SK-N-SH (cell line): ENCODE measurements at regions of chr11 and their contacts with region 1.

Region 1: DNA sequence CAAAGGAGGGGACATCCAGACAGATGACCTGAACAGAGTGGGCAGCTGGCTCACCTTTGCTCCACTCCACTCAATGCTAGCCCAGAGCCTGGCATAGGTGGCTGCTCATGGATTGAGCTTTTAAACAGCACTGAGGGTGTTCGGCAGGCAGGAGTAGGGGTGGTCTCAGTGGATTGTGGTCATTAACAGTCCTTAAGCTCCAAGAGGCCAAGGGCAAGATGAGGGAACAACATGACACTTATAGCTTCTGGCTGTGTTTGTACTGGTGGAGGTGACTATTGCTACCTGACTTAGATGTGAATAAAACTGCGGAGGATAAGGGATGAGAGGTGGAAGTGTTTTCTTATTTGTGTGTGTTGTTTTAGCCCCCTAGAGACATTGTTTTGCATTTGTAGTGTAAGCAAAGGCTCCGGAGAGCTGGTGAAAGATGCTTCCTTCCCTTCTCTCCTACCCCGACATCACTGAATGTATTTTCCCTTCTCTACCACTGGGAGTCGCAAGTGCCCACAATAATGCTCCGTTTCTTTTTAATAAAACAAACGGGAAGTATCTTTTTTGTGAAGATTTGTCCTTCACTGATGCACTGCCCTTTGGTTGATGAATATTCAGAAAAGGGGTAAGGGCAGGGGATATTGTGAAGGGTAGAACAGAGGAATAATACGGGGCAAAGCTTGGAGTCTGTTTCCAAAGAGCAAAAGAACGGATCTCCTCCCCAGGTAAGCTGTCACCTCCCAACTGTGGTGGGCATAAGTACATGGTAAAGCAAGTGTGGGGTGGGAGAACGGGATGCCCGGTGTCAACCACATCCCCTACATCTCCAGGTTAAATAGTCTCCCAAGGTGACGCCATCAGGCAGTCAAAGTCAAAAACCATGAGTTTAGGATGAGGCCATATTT is 27.5 kb upstream of the MTNR1B start:
- DNase-seq: peak; percentile 64
- H3K4me3 ChIP-seq: no peak overlapping the region; a peak in 1 of 4 replicates
- H3K27ac ChIP-seq: no peak overlapping the region
- H3K4me1 ChIP-seq: no peaks in the 10 kb centered on the region; a peak in 1 of 4 replicates
- H3K27me3 ChIP-seq: no peaks in the 10 kb centered on the region
- CTCF ChIP-seq: peak; percentile 81
- EP300 ChIP-seq: no peak
- RAD21 ChIP-seq: peak; percentile 94

Region 2: DNA sequence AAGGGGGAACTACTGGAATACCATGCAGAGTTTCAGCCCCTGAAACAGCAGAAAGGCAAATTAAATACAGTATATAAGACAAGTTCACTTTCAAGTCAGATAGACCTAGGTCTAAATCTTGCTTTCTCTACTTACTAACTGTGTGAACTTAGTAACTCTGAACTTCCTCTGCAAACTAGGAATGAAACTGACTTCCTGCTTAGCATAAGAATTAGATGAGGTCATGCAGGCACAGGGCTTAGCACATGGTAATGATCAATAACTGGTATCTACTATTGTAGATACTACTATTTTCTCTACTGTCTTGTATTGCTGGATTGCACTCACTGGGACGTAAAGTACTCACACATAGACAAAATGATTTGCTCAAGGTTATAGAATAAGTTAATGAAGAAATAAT is 24.0 kb before region 1 on chr11:
- CTCF ChIA-PET with region 1: interaction called, 15 read pairs
- POLR2A ChIA-PET with region 1: no interaction called
- DNase-seq: no peak
- H3K4me3 ChIP-seq: no peak overlapping the region
- H3K27ac ChIP-seq: no peak overlapping the region
- H3K4me1 ChIP-seq: peaks cover 0 to 11% of the 10 kb centered on the region in 2 experiments; a peak in 2 of 4 replicates
- H3K27me3 ChIP-seq: no peaks in the 10 kb centered on the region
- CTCF ChIP-seq: no peak
- EP300 ChIP-seq: no peak
- RAD21 ChIP-seq: no peak

Region 3: DNA sequence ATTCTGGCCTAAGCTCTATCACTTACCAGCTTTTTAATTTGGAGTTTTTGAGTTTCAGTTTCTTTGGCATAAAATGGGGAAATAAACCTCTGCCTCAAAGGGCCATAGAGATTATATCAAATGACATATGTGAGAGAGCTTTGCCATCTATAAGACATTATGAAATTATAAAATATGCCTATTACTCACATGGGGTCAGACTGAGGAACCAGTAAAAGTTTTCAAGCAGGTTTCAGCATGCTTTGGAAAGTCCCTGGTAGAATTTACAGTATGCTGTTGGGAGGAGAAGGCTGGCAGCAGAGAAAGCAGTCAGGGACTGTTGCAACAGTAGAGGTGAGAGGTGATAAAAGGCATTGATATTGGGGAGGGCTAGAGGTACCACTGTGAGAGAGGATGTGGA is 13.9 kb after region 1 on chr11:
- CTCF ChIA-PET with region 1: interaction called, 31 read pairs
- POLR2A ChIA-PET with region 1: no interaction called
- DNase-seq: no peak
- H3K4me3 ChIP-seq: no peak overlapping the region
- H3K27ac ChIP-seq: no peak overlapping the region
- H3K4me1 ChIP-seq: no peaks in the 10 kb centered on the region
- H3K27me3 ChIP-seq: no peaks in the 10 kb centered on the region
- CTCF ChIP-seq: no peak
- EP300 ChIP-seq: no peak
- RAD21 ChIP-seq: no peak

Region 4: GRCh38 chr11:92969634-92970347 is 27.9 kb after region 1 on chr11 and contains the start of gene MTNR1B:
- CTCF ChIA-PET with region 1: interaction called, 25 read pairs
- POLR2A ChIA-PET with region 1: no interaction called
- DNase-seq: peak; percentile 74
- H3K4me3 ChIP-seq: peak within 1 kb of the TSS in 1 of 2 experiments; percentile 28; a peak in 2 of 4 replicates
- H3K27ac ChIP-seq: no peak within 1 kb of the TSS
- H3K4me1 ChIP-seq: peaks cover 0 to 17% of the 10 kb centered on the region in 2 experiments; a peak in 2 of 4 replicates
- H3K27me3 ChIP-seq: no peaks in the 10 kb centered on the region
- CTCF ChIP-seq: no peak
- EP300 ChIP-seq: no peak
- RAD21 ChIP-seq: no peak
- polyA plus RNA-seq, gene MTNR1B: not detected in 2 replicates

Region 5: GRCh38 chr11:93063100-93063499 is 121.2 kb after region 1 on chr11:
- CTCF ChIA-PET with region 1: interaction called, 21 read pairs
- POLR2A ChIA-PET with region 1: no interaction called
- DNase-seq: no peak
- H3K4me3 ChIP-seq: no peak overlapping the region
- H3K27ac ChIP-seq: no peak overlapping the region
- H3K4me1 ChIP-seq: peaks cover 0 to 14% of the 10 kb centered on the region in 2 experiments; a peak in 3 of 4 replicates
- H3K27me3 ChIP-seq: no peaks in the 10 kb centered on the region
- CTCF ChIP-seq: no peak
- EP300 ChIP-seq: no peak
- RAD21 ChIP-seq: no peak

Region 6: DNA sequence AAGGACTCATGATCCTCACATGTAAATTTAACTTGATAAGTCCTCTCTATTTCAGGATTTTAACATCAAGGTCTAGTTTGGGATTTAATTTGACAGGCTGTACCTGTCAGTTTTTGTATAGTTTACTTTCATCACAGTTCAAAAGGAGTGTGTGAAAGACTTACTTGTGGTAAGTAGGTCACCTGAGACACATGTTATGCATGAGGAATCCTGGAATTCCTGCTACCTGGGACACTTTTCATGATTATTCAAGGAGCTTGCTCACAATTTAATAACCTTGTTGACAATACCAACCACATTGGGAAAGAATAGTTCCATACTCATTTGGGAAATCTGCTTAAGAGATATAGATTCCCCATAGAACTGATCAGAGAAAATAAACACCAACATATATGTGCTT is 271.7 kb after region 1 on chr11:
- CTCF ChIA-PET with region 1: interaction called, 10 read pairs
- POLR2A ChIA-PET with region 1: no interaction called
- DNase-seq: no peak
- H3K4me3 ChIP-seq: no peak overlapping the region
- H3K27ac ChIP-seq: no peak overlapping the region
- H3K4me1 ChIP-seq: peaks cover 0 to 10% of the 10 kb centered on the region in 2 experiments; a peak in 2 of 4 replicates
- H3K27me3 ChIP-seq: peaks cover under 1% of the 10 kb centered on the region; the same call in 1 of the 2 replicates
- CTCF ChIP-seq: no peak
- EP300 ChIP-seq: no peak
- RAD21 ChIP-seq: no peak

Region 7: GRCh38 chr11:93225662-93226061 is 283.7 kb after region 1 on chr11:
- CTCF ChIA-PET with region 1: interaction called, 74 read pairs
- POLR2A ChIA-PET with region 1: no interaction called
- DNase-seq: peak; percentile 46
- H3K4me3 ChIP-seq: no peak overlapping the region
- H3K27ac ChIP-seq: no peak overlapping the region
- H3K4me1 ChIP-seq: no peaks in the 10 kb centered on the region
- H3K27me3 ChIP-seq: no peaks in the 10 kb centered on the region
- CTCF ChIP-seq: peak; percentile 59
- EP300 ChIP-seq: no peak
- RAD21 ChIP-seq: peak; percentile 79

Region 8: DNA sequence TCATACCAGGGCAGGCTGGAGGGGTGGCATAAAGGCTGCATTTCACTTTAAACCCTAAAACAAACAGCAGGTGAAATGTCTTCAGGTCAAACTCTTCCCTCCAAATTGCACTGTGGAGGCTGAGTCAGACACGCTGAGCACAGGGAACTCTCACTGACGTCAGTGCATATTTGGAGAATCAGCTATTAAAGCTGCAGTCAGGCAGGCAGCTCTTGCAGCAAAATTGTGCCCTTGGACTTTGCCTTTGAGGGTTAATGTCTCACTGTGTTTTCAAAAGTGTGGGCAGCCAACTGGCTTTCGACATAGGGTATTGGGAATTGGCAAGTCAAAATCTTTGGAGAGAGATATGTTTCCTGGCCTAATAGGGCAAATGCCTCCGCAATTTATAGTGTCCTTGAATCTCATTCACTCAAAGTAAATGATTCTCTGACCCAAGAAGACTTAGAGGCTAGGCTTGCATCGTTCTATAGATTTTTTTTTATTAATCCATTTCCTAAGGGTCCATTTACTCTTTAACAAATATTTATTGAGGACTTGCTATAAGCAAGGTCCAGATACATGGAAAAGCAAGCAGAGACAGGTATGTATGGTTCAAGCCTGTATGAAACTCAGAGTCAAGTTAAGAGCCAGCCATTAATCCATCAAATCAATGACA is 629.0 kb after region 1 on chr11:
- CTCF ChIA-PET with region 1: no interaction called
- POLR2A ChIA-PET with region 1: no interaction called
- DNase-seq: no peak
- H3K4me3 ChIP-seq: no peak overlapping the region
- H3K27ac ChIP-seq: no peak overlapping the region
- H3K4me1 ChIP-seq: no peaks in the 10 kb centered on the region
- H3K27me3 ChIP-seq: no peaks in the 10 kb centered on the region
- CTCF ChIP-seq: no peak
- EP300 ChIP-seq: no peak
- RAD21 ChIP-seq: no peak